Heart right ventricle (tissue), 16 donors: ENCODE measurements at regions of chr9 and their contacts with region 1.

Region 1: DNA sequence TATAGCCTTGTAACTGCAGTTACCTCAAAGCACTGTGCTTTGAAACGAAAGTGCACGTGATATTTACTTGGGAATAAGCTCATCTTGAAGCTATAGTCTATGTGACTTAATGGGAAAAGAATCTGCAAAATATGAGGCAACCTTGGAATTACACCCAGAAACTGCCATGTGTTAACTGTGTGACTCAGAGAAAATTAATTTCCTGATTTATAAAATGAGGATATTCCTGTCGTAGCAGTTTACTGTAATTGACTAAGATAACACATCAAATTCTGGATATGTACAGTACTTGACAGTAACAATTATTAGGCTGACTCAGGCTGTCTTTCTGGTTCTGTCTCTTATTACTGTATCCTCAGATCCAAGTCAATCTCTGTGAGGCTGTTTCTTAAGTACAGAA is 1079.9 kb upstream of the ACO1 start:
- DNase-seq: no peak
- ATAC-seq: no peak
- H3K4me3 ChIP-seq: no peak overlapping the region
- H3K27ac ChIP-seq: no peak overlapping the region
- H3K4me1 ChIP-seq: no peaks in the 10 kb centered on the region
- H3K27me3 ChIP-seq: no peaks in the 10 kb centered on the region
- CTCF ChIP-seq: no peak

Region 2: DNA sequence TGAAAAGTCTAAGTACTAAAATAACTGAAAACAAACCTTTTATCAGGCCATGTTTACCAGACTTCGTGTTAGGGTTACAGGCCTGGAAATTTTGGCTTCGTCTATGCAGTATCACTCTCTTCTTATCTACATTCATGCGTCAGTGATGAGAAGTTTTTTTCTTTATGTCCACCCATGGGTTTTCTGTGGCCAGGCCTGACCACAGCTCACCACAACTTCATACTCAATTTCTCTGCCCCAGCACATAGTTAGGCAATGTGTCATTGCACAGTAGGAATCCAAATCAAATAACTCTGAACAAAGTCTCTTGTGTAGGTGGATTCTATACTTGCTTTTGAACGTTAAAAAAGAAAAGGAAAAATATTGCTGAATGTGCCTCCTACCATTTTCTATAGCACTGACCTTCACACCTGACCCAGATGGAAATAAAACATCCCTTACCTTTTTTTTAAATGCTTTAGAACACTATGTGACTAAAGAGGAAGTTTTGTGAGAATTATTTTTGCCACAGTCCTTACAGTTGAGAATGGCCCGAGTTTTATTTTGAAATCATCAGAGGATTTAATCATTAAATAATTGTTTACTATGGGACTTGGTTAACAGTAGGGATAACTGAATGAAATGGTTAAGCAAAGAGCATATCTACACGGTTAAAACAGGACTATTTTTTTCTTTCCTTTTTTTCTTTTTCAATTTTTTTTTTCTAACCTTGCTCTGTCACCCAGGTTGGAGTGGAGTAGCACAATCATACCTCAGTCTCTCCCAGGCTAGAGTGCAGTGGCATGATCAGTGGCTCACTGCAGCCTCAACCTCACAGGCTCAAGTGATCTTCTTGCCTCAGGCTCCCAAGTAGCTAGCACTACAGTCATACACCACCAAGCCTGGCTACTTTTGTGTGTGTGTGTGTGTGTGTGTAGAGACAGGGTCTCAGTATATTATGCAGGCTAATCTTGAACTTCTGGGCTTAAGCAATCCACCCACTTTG is 167.1 kb before region 1 on chr9:
- intact Hi-C with region 1: loop called in 1 of 10 experiments (anchors 5 kb)
- DNase-seq: no peak
- ATAC-seq: peak in 1 of 8 donors; percentile 22
- H3K4me3 ChIP-seq: no peak overlapping the region
- H3K27ac ChIP-seq: no peak overlapping the region
- H3K4me1 ChIP-seq: no peaks in the 10 kb centered on the region
- H3K27me3 ChIP-seq: no peaks in the 10 kb centered on the region
- CTCF ChIP-seq: no peak

Region 3: GRCh38 chr9:31259824-31260223 is 44.8 kb before region 1 on chr9:
- intact Hi-C with region 1: no loop called
- DNase-seq: no peak
- ATAC-seq: no peak
- H3K4me3 ChIP-seq: no peak overlapping the region
- H3K27ac ChIP-seq: no peak overlapping the region
- H3K4me1 ChIP-seq: no peaks in the 10 kb centered on the region
- H3K27me3 ChIP-seq: no peaks in the 10 kb centered on the region
- CTCF ChIP-seq: no peak

Region 4: GRCh38 chr9:31394015-31394473 is 89.5 kb after region 1 on chr9:
- intact Hi-C with region 1: no loop called
- DNase-seq: no peak
- ATAC-seq: peak in 1 of 8 donors; percentile 46
- H3K4me3 ChIP-seq: no peak overlapping the region
- H3K27ac ChIP-seq: no peak overlapping the region
- H3K4me1 ChIP-seq: peaks cover 0 to 17% (median 12%) of the 10 kb centered on the region in 9 donors
- H3K27me3 ChIP-seq: no peaks in the 10 kb centered on the region
- CTCF ChIP-seq: no peak